Vagina (tissue), 2 donors: ENCODE measurements at regions of chr12 and their contacts with region 1.

Region 1: GRCh38 chr12:107093417-107094182 is at the start of gene CRY1:
- DNase-seq: peak in 1 of 2 donors; percentile 96
- H3K4me3 ChIP-seq: peak within 1 kb of the TSS; percentile 82 to 95
- H3K27ac ChIP-seq: peak within 1 kb of the TSS; percentile 99
- H3K4me1 ChIP-seq: peaks cover 28% of the 10 kb centered on the region
- H3K27me3 ChIP-seq: no peaks in the 10 kb centered on the region
- CTCF ChIP-seq: no peak
- POLR2A ChIP-seq: peak; percentile 62 to 98
- total RNA-seq, gene CRY1: 18.7 TPM

Region 2: GRCh38 chr12:106955377-106956047 is 138.1 kb before region 1 on chr12 and contains the start of gene TMEM263:
- intact Hi-C with region 1: loop called (anchors 1 kb)
- DNase-seq: peak in 1 of 2 donors; percentile 94
- H3K4me3 ChIP-seq: peak within 1 kb of the TSS; percentile 74 to 89
- H3K27ac ChIP-seq: peak within 1 kb of the TSS; percentile 99
- H3K4me1 ChIP-seq: peaks cover 40% of the 10 kb centered on the region
- H3K27me3 ChIP-seq: no peaks in the 10 kb centered on the region
- CTCF ChIP-seq: no peak
- POLR2A ChIP-seq: peak in 1 of 2 donors; percentile 96
- total RNA-seq, gene TMEM263: 19.6 TPM

Region 3: GRCh38 chr12:106986625-106987430 is 106.8 kb before region 1 on chr12 and contains the start of gene MTERF2:
- intact Hi-C with region 1: loop called (anchors 10 kb)
- DNase-seq: peak in 1 of 2 donors; percentile 98
- H3K4me3 ChIP-seq: peak within 1 kb of the TSS; percentile 71 to 83
- H3K27ac ChIP-seq: peak within 1 kb of the TSS; percentile 91
- H3K4me1 ChIP-seq: peaks cover 33% of the 10 kb centered on the region
- H3K27me3 ChIP-seq: no peaks in the 10 kb centered on the region
- CTCF ChIP-seq: no peak
- POLR2A ChIP-seq: peak in 1 of 2 donors; percentile 50
- total RNA-seq, gene MTERF2: 14.5 TPM

Region 4: DNA sequence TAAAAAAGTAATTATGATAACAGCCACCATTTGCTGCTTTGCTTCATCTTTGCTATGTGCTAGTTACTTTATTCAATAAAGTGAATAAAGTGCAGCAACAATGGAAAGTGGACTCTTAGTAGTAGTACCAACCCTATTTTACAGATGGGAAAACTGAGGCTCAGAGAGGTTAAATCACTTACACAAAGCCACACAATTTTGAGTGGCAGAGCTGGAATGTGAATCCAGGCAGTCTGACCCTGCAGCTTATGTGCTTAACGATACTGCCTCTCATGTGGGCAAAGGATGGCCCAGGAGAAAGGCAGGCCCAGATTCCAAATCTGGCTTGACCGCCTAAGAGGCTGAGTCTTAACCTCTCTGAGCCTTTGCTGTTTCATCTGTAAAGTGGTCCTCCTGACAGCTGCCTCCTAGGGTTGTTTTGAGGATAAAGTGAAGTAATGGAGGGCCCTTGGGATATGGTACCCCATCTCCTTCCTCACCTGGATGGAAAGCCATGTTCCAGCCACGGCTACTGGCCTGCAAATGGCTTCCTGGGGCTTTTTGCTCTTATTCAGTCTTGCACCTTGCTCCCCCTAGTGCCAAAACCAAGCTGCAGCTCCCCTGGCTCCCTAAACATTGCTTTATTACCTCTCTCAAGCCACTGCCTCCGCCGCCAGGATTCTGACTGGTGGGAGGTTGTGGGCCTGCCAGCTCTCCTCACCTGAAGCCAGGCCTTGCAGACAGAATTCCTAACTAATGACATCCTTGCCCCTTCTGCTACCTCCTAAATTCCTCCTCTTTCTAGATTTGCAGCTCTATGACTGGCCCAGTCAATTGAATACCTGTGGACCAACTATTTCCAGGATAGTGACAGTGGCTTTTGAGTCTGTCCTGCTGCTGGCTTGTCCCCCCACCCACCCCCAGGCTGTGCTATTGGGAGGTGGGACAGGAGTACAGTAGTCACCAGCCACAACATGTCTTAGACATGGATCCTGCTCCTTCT is 308.7 kb after region 1 on chr12:
- intact Hi-C with region 1: no loop called
- DNase-seq: no peak
- H3K4me3 ChIP-seq: no peak overlapping the region
- H3K27ac ChIP-seq: no peak overlapping the region
- H3K4me1 ChIP-seq: no peaks in the 10 kb centered on the region
- H3K27me3 ChIP-seq: no peaks in the 10 kb centered on the region
- CTCF ChIP-seq: peak in 2 of 3 experiments; percentile 13 to 30
- POLR2A ChIP-seq: no peak